HepG2 (cell line): ENCODE measurements at regions of chr18 and their contacts with region 1.

Region 1: GRCh38 chr18:24362758-24363157 is 34.9 kb downstream of the OSBPL1A start:
- DNase-seq: no peak
- ATAC-seq: no peak
- H3K4me3 ChIP-seq: no peak overlapping the region
- H3K27ac ChIP-seq: no peak overlapping the region
- H3K4me1 ChIP-seq: no peaks in the 10 kb centered on the region
- H3K27me3 ChIP-seq: no peaks in the 10 kb centered on the region
- CTCF ChIP-seq: no peak
- EP300 ChIP-seq: no peak
- POLR2A ChIP-seq: no peak
- RAD21 ChIP-seq: no peak

Region 2: DNA sequence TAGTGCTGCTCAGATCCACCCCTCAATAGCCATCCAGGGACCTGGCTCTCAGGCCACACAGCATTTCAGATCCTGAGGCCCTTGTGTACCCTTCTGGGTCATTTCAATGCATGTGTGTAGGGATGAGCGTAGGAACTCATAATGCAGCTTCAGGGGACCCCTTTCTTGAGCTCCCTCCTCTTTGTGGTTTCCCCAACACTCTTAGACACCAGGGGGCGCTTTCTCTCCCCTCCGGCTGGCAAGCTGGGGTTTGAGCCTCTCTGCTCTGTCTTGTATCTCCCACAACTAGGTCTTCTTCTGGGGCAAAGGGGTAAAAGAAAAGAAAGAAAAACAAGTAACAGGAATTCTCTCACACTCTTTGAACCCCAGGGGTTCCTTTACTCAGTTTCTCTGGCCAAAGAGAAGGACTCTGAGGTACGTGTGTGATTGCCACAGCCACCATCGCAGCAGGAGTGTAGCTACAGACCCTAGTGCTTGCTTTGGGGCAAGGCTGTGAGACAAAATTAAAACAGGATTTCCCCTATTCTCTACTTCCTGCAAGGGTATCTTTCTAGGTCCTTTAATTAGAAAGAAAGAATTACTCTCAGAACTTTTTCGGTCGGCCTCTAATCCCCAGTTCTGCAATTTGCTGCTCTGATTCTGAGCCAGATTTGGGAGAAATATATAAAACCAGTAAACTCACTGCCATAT is 185.9 kb before region 1 on chr18:
- CTCF ChIA-PET with region 1: no interaction called
- POLR2A ChIA-PET with region 1: no interaction called
- in situ Hi-C with region 1: no loop called
- intact Hi-C with region 1: loop called (anchors 2 kb)
- DNase-seq: peak; percentile 37
- ATAC-seq: peak; percentile 78
- H3K4me3 ChIP-seq: no peak overlapping the region
- H3K27ac ChIP-seq: no peak overlapping the region
- H3K4me1 ChIP-seq: no peaks in the 10 kb centered on the region
- H3K27me3 ChIP-seq: peaks cover 1 to 4% of the 10 kb centered on the region in 2 experiments; a peak in 2 of 5 replicates
- CTCF ChIP-seq: peak; percentile 70
- EP300 ChIP-seq: no peak
- POLR2A ChIP-seq: no peak
- RAD21 ChIP-seq: peak; percentile 30; the same call in 1 of the 2 replicates

Region 3: DNA sequence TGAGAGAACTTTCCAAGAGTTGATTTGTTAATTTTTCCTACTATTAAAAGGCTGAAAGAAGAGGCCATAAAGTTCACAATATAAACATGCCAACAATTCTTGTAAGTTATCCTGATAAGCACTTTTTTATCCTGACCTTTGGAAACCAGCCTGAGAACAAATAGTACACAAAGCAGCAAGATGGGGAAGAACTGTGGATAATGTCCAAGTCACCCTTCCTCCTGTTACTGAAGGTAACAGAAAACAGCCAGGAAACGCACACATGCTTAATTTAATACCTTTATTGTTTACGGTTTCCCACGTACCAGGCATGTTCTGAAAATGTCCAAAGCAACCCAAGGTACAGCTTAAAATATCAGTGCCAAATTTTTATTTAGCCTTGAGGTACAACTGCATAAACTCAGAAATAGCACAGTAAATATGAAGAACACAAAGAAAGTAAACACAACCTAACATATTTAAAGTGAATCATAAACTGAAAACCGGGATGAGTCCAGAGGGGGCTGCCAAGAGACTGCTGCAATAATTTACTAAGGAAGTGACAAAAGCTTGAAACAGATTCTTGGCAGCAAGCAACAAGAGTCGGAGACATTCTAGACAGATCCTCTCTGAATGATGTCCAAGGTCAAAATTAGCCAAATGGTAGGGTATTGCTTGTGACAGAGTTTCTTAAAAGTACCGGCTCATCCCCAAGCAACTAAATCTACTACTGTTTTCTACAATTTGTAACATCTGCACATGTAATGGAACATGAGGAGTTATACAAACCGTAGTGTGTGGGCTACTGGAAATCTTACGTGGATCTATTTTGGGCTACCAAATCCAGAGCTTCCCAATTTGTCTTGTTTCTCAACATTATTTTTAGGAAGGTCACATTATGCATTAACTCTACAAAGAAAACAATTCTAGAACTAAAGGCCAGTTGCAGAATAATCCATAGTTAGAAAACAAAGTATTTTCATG is 130.7 kb before region 1 on chr18:
- CTCF ChIA-PET with region 1: no interaction called
- POLR2A ChIA-PET with region 1: no interaction called
- in situ Hi-C with region 1: no loop called
- intact Hi-C with region 1: no loop called
- DNase-seq: no peak
- ATAC-seq: no peak
- H3K4me3 ChIP-seq: no peak overlapping the region
- H3K27ac ChIP-seq: no peak overlapping the region
- H3K4me1 ChIP-seq: no peaks in the 10 kb centered on the region
- H3K27me3 ChIP-seq: no peaks in the 10 kb centered on the region; a peak in 1 of 5 replicates
- CTCF ChIP-seq: no peak
- EP300 ChIP-seq: no peak
- POLR2A ChIP-seq: no peak
- RAD21 ChIP-seq: no peak

Region 4: DNA sequence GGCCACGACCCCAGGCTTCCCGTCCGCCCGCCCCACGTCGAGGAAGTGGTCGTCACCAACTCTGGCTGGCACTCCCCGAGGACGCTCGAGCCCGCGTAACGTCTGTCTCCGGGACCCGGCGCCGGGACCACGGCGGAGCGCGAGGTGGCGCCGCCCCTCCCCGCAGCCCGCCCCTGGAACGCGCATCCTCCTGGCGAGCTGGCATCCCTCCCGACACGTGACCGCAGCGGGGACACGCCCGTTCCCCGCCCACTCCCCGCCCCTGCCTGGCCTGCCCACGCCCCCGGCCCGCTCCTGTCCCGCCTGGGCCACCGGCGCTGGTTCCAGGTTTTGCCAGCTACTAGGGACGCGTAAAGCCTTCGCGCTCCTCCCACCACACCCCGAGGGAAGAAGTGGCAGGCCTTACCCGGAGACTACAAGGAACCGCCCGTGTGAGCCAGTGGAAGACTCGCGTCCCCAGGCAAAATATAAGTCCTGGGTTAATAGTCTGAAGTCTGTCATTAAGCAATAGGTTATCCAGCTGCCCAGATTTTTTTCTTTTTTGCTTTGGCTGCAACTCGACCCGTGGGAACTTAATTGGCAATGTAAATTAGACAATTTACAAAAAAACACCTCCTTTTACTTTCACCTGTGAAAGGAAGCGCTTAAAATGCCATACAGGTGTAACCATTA is 35.1 kb after region 1 on chr18 and contains the start of gene OSBPL1A:
- CTCF ChIA-PET with region 1: no interaction called
- POLR2A ChIA-PET with region 1: no interaction called
- in situ Hi-C with region 1: no loop called
- intact Hi-C with region 1: loop called (anchors 2 kb)
- DNase-seq: peak; percentile 28
- ATAC-seq: peak; percentile 90
- H3K4me3 ChIP-seq: peak within 1 kb of the TSS in 2 of 3 experiments; percentile 31 to 46; a peak in 4 of 6 replicates
- H3K27ac ChIP-seq: no peak within 1 kb of the TSS
- H3K4me1 ChIP-seq: peaks cover 7% of the 10 kb centered on the region; the same call in 1 of the 2 replicates
- H3K27me3 ChIP-seq: peaks cover 0 to 33% of the 10 kb centered on the region in 2 experiments
- CTCF ChIP-seq: no peak
- EP300 ChIP-seq: no peak
- POLR2A ChIP-seq: no peak
- RAD21 ChIP-seq: no peak
- total RNA-seq, gene OSBPL1A: 0.02 and 0.13 TPM in 2 replicates